ENCODE measurements at regions of chr5 and their contacts with region 1.

Region 1: DNA sequence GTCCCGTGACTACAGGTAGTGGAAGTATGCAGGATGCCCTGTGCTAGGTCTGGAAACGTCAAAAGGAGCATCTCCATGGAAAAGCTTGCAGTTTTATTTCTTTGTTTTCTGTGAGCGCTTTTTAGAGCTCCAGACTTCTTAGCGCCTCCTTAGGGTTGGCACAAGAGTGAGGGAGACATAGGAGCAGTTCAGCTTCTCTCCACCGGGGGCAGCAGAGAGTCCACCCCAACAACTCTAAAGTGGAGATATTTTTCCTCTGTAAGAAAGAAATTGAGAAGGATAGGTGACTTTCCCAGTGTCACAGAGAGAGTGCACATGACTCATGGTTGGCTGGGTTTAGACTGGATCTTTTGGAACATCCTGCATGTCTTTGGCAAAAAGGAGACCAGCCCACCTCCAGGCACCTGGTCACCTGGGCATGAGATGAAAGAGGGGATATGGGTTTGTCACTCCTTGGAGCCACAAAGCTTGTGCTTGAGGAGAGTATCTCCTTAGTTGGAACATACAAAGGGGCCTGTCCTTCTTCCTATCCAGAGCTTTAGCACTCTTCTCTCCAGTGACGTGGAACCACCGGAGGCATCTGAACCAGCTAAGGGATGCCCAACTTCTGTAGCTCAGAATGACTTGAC is 637.7 kb downstream of the SEMA5A start:
- DNase-seq: peak; percentile 68 to 90
- H3K4me3 ChIP-seq: no peak overlapping the region
- H3K27ac ChIP-seq: no peak overlapping the region
- H3K4me1 ChIP-seq: no peaks in the 10 kb centered on the region
- H3K27me3 ChIP-seq: no peaks in the 10 kb centered on the region
- CTCF ChIP-seq: peak; percentile 79 to 96 (median 90)
- EP300 ChIP-seq: no peak
- POLR2A ChIP-seq: no peak
- RAD21 ChIP-seq: peak; percentile 53 to 63

Region 2: DNA sequence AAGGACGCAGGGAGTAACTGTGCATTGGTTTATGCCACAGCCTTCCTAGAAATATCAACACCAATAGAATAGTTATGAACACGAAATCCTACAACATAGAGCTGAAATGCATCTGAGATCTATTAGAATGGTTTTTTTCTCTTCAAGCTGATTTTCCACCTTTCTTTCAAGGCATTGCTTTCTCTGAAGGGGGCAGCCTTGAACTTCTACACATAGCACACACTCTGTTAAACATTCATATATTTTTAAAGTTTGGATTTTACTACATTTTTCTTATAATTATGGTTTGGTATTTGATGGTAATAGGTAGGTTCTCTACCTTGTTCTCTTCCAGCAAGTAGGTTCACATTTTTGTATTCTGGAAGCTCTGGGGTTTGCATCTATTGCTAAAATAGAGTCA is 24.1 kb before region 1 on chr5:
- CTCF ChIA-PET with region 1: interaction called, 14 read pairs
- POLR2A ChIA-PET with region 1: no interaction called
- DNase-seq: no peak
- H3K4me3 ChIP-seq: no peak overlapping the region
- H3K27ac ChIP-seq: no peak overlapping the region
- H3K4me1 ChIP-seq: no peaks in the 10 kb centered on the region
- H3K27me3 ChIP-seq: no peaks in the 10 kb centered on the region
- CTCF ChIP-seq: peak in 1 of 3 experiments; percentile 8; a peak in 1 of 4 replicates
- EP300 ChIP-seq: no peak
- POLR2A ChIP-seq: no peak
- RAD21 ChIP-seq: no peak; a peak in 1 of 4 replicates

Region 3: DNA sequence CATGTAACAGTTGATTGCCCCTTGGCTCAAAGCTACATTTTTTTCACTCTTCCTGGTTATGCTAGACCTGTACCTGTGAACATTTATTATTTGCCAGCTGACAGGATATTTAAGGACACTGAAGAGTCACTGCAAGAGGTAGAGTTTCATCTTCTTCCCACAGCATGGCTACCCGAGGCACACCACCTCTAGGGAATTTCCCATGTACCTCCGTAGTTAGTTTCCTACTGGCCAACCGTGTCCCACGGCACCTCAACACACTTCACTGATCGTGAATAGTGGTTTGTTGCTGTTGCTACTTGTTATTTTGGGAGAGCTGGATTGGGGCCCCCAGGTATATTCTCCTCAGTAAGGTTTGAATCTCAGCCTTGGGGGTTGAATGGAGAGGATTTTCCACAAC is 10.9 kb before region 1 on chr5:
- CTCF ChIA-PET with region 1: interaction called, 10 read pairs
- POLR2A ChIA-PET with region 1: no interaction called
- DNase-seq: no peak
- H3K4me3 ChIP-seq: no peak overlapping the region
- H3K27ac ChIP-seq: no peak overlapping the region
- H3K4me1 ChIP-seq: no peaks in the 10 kb centered on the region
- H3K27me3 ChIP-seq: no peaks in the 10 kb centered on the region
- CTCF ChIP-seq: no peak
- EP300 ChIP-seq: no peak
- POLR2A ChIP-seq: no peak
- RAD21 ChIP-seq: no peak

Region 4: DNA sequence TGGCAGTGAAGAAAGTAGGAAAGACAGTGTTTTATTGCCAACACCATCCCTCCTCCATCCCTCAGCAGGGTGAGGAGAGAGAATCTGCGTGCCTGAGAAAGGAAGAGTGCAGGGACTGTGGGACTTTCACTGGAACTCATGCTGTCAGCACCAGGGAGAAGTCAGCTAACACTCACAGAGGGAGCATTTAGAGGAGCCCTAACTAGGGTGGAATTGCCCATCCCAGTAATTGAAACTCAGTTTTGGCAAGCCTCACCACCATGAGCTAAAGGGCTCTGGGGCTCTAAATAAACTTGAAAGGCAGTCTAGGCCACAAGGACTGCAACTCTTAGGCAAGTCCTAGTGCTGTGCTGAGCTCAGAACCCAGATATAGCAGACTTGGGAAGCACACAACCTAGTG is 15.4 kb after region 1 on chr5:
- CTCF ChIA-PET with region 1: interaction called, 17 read pairs
- POLR2A ChIA-PET with region 1: no interaction called
- DNase-seq: no peak
- H3K4me3 ChIP-seq: no peak overlapping the region
- H3K27ac ChIP-seq: no peak overlapping the region
- H3K4me1 ChIP-seq: no peaks in the 10 kb centered on the region
- H3K27me3 ChIP-seq: no peaks in the 10 kb centered on the region
- CTCF ChIP-seq: no peak
- EP300 ChIP-seq: no peak
- POLR2A ChIP-seq: no peak
- RAD21 ChIP-seq: no peak